Activated T-helper 2 cell treated with anti-CD3 and anti-CD28 coated beads, Interferon-gamma antibody, Interleukin-2, Interleukin-4, amounts not matched to agents 10 μg/mL and 5 μg/mL and 100 μg/mL, durations not matched to agents 14 hours and 24 hours and 36 hours (primary cell): ENCODE measurements at regions of chr18 and their contacts with region 1.

Region 1: GRCh38 chr18:7950380-7951143 is 383.4 kb downstream of the PTPRM start:
- DNase-seq: no peak
- H3K4me3 Mint-ChIP-seq: no peak overlapping the region
- H3K27ac Mint-ChIP-seq: no peak overlapping the region
- H3K4me1 Mint-ChIP-seq: peaks cover 22% of the 10 kb centered on the region
- H3K27me3 Mint-ChIP-seq: no peaks in the 10 kb centered on the region

Region 2: DNA sequence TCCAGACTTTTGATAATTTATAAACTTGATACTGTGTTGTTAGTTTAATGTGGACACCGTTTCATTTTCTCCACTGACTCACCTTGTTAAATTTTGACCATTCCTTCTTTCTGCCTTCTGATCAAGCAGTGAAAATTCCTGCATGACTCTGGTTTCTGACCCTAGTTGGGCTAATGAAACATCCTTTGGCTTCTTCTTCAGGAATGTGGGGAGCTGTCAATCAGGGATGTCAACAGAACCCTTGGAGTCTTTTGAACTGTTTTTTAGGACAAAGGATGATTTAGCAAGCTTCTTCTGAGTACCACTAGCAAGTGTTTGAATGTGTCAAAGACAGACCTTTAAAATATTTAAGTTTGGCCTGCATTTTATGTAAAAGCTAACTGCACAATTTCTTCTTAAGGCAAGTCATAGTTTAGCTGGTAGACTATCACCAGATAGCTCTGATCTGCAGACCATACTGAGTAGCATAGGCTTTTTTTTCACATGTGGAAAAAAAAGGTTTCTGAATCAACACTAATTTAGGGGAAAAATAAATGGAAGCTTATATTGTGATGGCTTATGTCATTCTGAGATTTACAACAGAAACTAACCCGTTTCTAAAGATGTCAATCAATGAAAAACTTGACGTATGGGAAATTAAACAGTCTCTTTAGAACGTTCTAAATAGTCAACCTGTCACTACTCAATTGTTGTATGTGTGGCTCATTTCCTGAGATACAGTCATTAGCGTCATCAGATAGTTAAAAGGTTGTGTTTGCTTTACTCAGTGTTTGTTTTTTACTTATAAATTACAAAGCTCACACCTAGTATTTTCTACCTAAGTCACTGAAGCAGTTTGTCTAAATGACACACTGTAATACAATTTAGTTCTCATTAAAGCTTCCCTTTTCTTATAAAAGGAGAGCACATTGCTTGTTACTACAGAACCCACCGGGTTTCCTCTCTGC is 72.0 kb before region 1 on chr18:
- intact Hi-C with region 1: loop called (anchors 2 kb)
- DNase-seq: no peak
- H3K4me3 Mint-ChIP-seq: no peak overlapping the region
- H3K27ac Mint-ChIP-seq: no peak overlapping the region
- H3K4me1 Mint-ChIP-seq: no peaks in the 10 kb centered on the region
- H3K27me3 Mint-ChIP-seq: peaks cover 2% of the 10 kb centered on the region

Region 3: DNA sequence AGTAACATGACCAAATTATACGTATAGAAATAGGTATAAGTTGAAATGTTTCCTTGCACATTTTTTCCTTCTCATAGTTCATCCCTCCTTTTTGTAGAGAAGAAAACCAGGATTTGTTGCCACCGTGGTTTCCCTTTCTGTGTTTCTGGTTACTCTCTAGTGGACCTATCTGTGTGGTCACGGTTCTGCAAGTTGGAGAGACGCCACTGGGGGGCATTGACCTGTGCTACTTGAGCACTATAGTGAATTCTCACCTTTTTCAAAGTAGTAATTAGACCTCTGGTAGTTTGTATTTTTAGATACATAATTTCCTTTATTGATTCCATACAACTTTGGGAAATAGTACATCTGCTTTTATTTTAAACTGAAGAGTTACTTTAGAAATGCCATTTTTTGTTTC is 61.3 kb after region 1 on chr18:
- intact Hi-C with region 1: no loop called
- DNase-seq: no peak
- H3K4me3 Mint-ChIP-seq: no peak overlapping the region
- H3K27ac Mint-ChIP-seq: no peak overlapping the region
- H3K4me1 Mint-ChIP-seq: no peaks in the 10 kb centered on the region
- H3K27me3 Mint-ChIP-seq: no peaks in the 10 kb centered on the region

Region 4: GRCh38 chr18:8608795-8609658 is 658.5 kb after region 1 on chr18 and contains the start of gene RAB12:
- intact Hi-C with region 1: loop called (anchors 10 kb)
- DNase-seq: peak; percentile 79
- H3K4me3 Mint-ChIP-seq: peak within 1 kb of the TSS; percentile 94
- H3K27ac Mint-ChIP-seq: peak within 1 kb of the TSS; percentile 85
- H3K4me1 Mint-ChIP-seq: peaks cover 50% of the 10 kb centered on the region
- H3K27me3 Mint-ChIP-seq: peaks cover 20% of the 10 kb centered on the region
- total RNA-seq, gene RAB12: 14.7 and 17.2 TPM in 2 replicates